Activated CD4-positive, alpha-beta T cell treated with anti-CD3 and anti-CD28 coated beads, Interleukin-2, amount 10 ng/mL, durations not matched to agents 24 days and 14 days (primary cell): ENCODE measurements at regions of chr4 and their contacts with region 1.

Region 1: GRCh38 chr4:165131247-165131832 is 18.7 kb upstream of the TMEM192 start:
- DNase-seq: peak; percentile 95
- H3K4me3 Mint-ChIP-seq: no peak overlapping the region
- H3K27ac Mint-ChIP-seq: no peak overlapping the region
- H3K4me1 Mint-ChIP-seq: peaks cover 17% of the 10 kb centered on the region
- H3K27me3 Mint-ChIP-seq: peaks cover 17% of the 10 kb centered on the region

Region 2: GRCh38 chr4:165248102-165248501 is 116.8 kb after region 1 on chr4:
- intact Hi-C with region 1: loop called (anchors 10 kb)
- DNase-seq: no peak
- H3K4me3 Mint-ChIP-seq: no peak overlapping the region
- H3K27ac Mint-ChIP-seq: no peak overlapping the region
- H3K4me1 Mint-ChIP-seq: peaks cover 17% of the 10 kb centered on the region
- H3K27me3 Mint-ChIP-seq: no peaks in the 10 kb centered on the region

Region 3: DNA sequence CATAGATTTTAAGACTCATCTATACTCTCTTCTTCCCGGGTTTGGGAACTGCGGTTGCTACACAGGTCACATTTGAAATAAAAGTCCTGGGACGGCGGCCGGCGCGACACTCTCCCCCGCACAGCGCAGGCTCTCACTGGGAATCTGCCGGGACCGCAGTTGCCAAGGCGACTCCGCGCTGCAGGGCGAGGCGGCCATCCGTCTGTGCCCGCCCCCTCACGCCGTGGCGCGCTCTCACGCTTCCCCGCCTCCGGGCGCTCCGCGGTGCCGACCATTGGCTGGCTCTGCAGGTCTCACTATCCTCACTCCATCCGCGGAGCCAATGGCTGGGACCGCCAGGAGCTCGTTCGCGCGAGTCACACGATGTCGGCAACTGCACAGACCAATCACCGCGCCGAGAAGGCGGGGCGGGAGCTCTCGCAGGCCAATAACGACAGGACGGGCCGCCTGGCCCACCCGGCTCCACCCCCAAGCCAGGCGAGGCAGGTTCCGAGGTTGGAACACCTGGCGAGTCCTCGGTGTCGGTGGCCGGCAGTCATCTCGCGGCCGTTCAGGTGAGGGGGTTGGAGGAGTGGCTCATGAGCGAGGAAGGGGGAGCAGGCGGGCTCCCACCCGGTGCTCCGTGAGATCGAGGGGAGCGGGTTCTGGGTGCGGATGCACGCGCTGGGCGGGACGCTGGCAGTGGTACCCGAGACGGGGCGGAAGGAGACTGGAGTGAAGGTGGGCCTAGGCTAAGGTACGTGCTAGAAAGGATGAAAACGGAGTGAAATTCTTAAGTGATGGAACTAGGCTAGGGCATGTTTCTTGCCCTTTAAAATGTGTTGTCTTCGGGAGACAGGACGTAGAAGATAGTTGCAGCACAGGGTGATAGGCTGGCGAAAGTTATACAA is 196.1 kb after region 1 on chr4 and contains the start of gene MSMO1:
- intact Hi-C with region 1: loop called (anchors 5 kb)
- DNase-seq: peak; percentile 100
- H3K4me3 Mint-ChIP-seq: no peak within 1 kb of the TSS
- H3K27ac Mint-ChIP-seq: peak within 1 kb of the TSS; percentile 73
- H3K4me1 Mint-ChIP-seq: peaks cover 38% of the 10 kb centered on the region
- H3K27me3 Mint-ChIP-seq: no peaks in the 10 kb centered on the region
- total RNA-seq, gene MSMO1: 82.0 and 82.3 TPM in 2 replicates

Region 4: DNA sequence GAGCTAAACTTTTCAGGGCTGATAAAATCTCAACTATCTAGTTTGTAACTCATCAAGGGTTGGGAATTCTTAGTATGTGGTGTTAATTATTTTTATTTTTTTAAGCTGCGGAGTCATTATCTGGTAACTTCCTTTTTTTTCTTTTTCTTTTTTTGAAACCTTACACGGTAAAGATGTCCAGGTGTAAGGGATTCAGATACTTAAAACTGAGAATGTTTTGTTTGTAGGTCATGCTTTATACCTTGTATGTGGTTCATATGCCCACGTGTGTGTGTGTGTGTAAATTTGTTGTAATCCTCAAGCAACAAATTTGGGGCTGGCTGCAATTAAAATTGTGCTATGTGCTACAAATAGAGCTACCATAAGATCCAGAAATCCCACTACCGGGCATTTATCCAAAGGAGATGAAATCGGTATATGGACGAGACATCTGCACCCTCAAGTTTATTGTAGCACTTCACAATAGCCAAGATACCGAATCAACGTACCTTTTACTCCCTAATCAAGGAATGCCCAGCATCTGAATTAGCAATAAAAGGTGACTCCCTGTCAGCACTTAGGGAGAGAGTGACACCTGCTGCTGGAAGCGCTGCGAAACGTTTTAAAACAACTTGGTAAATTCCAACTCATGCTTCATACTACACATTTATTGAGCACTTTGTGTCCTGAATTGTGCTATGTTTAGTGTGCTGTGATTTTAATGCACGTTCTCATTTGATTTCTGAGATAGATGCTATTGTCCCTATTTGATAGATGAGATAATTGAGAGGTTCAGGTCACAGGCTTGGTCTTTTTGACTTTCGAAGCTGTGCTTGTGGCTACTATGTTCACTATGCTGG is 212.2 kb after region 1 on chr4:
- intact Hi-C with region 1: loop called (anchors 1 kb)
- DNase-seq: peak; percentile 66
- H3K4me3 Mint-ChIP-seq: no peak overlapping the region
- H3K27ac Mint-ChIP-seq: no peak overlapping the region
- H3K4me1 Mint-ChIP-seq: peaks cover 2% of the 10 kb centered on the region
- H3K27me3 Mint-ChIP-seq: no peaks in the 10 kb centered on the region

Region 5: GRCh38 chr4:165464813-165465381 is 333.6 kb after region 1 on chr4:
- intact Hi-C with region 1: loop called (anchors 1 kb)
- DNase-seq: peak; percentile 65
- H3K4me3 Mint-ChIP-seq: no peak overlapping the region
- H3K27ac Mint-ChIP-seq: no peak overlapping the region
- H3K4me1 Mint-ChIP-seq: no peaks in the 10 kb centered on the region
- H3K27me3 Mint-ChIP-seq: peaks cover 7% of the 10 kb centered on the region

Region 6: GRCh38 chr4:165524532-165525190 is 393.3 kb after region 1 on chr4:
- intact Hi-C with region 1: no loop called
- DNase-seq: no peak
- H3K4me3 Mint-ChIP-seq: no peak overlapping the region
- H3K27ac Mint-ChIP-seq: no peak overlapping the region
- H3K4me1 Mint-ChIP-seq: no peaks in the 10 kb centered on the region
- H3K27me3 Mint-ChIP-seq: no peaks in the 10 kb centered on the region

Region 7: GRCh38 chr4:166259081-166259480 is 1127.7 kb after region 1 on chr4:
- intact Hi-C with region 1: no loop called
- DNase-seq: no peak
- H3K4me3 Mint-ChIP-seq: no peak overlapping the region
- H3K27ac Mint-ChIP-seq: no peak overlapping the region
- H3K4me1 Mint-ChIP-seq: no peaks in the 10 kb centered on the region
- H3K27me3 Mint-ChIP-seq: no peaks in the 10 kb centered on the region